ENCODE measurements at regions of chr10 and their contacts with region 1.

Region 1: GRCh38 chr10:133438711-133439273 is 14.4 kb upstream of the SPRN start:
- DNase-seq: no peak
- H3K4me3 Mint-ChIP-seq: no peak overlapping the region
- H3K27ac Mint-ChIP-seq: no peak overlapping the region
- H3K4me1 Mint-ChIP-seq: peaks cover 7% of the 10 kb centered on the region
- H3K27me3 Mint-ChIP-seq: peaks cover 6% of the 10 kb centered on the region

Region 2: DNA sequence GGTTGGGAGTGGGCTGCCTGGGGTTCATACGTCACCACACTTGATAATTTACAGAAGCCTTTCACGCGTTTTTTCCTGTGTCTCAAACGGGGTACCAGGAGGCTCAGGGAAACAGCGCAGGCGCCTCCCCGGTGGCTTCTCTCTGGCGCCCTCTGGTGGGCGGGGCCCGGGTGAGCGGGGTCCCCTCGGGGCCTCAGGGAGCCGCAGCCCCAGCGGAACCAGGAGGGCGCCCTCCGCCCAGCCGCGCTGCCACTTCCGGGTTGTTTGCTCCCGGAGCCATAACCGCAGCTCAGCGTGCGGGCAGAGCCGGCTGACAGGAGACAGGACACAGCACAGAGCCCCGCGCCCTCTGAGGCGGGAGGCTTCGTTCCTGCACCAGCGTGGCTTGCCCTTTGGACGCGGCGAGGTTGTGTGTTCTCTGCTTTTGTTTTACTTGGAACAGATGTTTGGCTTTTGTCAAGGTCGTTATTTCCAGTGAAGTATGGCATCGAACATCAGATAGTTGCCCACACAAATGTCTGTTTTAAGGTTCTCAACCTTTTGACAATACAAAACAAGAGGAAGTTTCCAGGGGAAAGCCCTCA is 81.5 kb after region 1 on chr10:
- CTCF ChIA-PET with region 1: interaction called, 5 read pairs
- intact Hi-C with region 1: loop called (anchors 1 kb)
- DNase-seq: peak; percentile 96
- H3K4me3 Mint-ChIP-seq: peak overlapping the region; percentile 73
- H3K27ac Mint-ChIP-seq: peak overlapping the region; percentile 8
- H3K4me1 Mint-ChIP-seq: peaks cover 6% of the 10 kb centered on the region
- H3K27me3 Mint-ChIP-seq: no peaks in the 10 kb centered on the region

Region 3: DNA sequence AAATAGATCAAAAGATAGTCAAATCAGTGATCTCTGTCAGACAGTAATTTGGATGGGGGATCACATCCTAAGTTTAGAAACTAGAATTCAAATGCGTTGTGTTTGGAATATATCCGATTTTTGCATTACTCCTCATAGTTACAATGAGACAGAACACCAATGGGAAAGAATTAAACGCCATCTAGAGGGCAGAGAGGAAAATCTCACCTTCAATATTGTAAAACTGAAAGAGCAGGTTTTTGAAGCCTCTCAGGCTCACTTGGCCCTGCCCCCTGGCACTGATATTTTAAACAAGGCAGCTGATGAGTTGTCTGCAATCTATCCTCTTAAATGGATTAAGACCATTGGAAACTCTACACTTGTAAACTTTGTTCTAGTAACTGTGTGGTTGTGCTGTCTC is 170.1 kb after region 1 on chr10:
- CTCF ChIA-PET with region 1: interaction called, 6 read pairs
- intact Hi-C with region 1: loop called (anchors 1 kb)
- DNase-seq: no peak
- H3K4me3 Mint-ChIP-seq: no peak overlapping the region
- H3K27ac Mint-ChIP-seq: no peak overlapping the region
- H3K4me1 Mint-ChIP-seq: no peaks in the 10 kb centered on the region
- H3K27me3 Mint-ChIP-seq: peaks cover 22% of the 10 kb centered on the region